HCT116 (cell line): ENCODE measurements at regions of chr22 and their contacts with region 1.

Region 1: GRCh38 chr22:31977141-31977841 is 33.0 kb downstream of the YWHAH start:
- DNase-seq: peak; percentile 81
- ATAC-seq: peak; percentile 99
- H3K4me3 ChIP-seq: no peak overlapping the region
- H3K27ac ChIP-seq: no peak overlapping the region
- H3K4me1 ChIP-seq: peaks cover 0 to 6% of the 10 kb centered on the region in 2 experiments; a peak in 2 of 4 replicates
- H3K27me3 ChIP-seq: no peaks in the 10 kb centered on the region
- CTCF ChIP-seq: peak; percentile 84 to 92 (median 86)
- POLR2A ChIP-seq: no peak
- RAD21 ChIP-seq: peak; percentile 98

Region 2: GRCh38 chr22:31929167-31929930 is 47.9 kb before region 1 on chr22:
- CTCF ChIA-PET with region 1: no interaction called
- POLR2A ChIA-PET with region 1: no interaction called
- RAD21 ChIA-PET with region 1: no interaction called
- intact Hi-C with region 1: no loop called
- DNase-seq: no peak
- ATAC-seq: no peak
- H3K4me3 ChIP-seq: no peak overlapping the region
- H3K27ac ChIP-seq: no peak overlapping the region
- H3K4me1 ChIP-seq: no peaks in the 10 kb centered on the region
- H3K27me3 ChIP-seq: peaks cover 5% of the 10 kb centered on the region; the same call in 1 of the 2 replicates
- CTCF ChIP-seq: no peak
- POLR2A ChIP-seq: no peak
- RAD21 ChIP-seq: no peak

Region 3: DNA sequence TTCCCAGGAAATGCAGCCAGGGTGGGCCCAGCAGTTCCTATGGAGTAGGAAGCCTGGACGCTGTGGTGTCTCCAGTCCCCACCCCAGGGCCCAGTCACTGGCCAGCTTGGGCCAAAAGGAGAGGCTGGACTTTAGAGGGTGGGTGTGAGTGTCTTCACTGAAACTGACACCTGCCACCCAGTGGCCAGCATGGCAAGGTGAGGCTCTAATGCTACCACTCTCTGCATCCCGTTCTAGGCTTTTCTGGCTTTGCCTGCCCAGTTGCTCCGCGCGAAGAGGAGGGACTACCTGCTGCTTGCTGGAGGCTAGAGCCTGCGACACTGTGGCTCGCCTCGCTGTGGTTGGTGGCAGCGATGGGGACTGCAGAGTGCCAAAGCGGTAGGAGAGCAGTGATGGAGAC is 146.4 kb after region 1 on chr22:
- CTCF ChIA-PET with region 1: interaction called, 11 read pairs
- POLR2A ChIA-PET with region 1: no interaction called
- RAD21 ChIA-PET with region 1: no interaction called
- intact Hi-C with region 1: loop called (anchors 2 kb)
- DNase-seq: no peak
- ATAC-seq: peak; percentile 92
- H3K4me3 ChIP-seq: no peak overlapping the region
- H3K27ac ChIP-seq: no peak overlapping the region
- H3K4me1 ChIP-seq: no peaks in the 10 kb centered on the region
- H3K27me3 ChIP-seq: no peaks in the 10 kb centered on the region
- CTCF ChIP-seq: peak; percentile 18 to 60 (median 59); a peak in 5 of 6 replicates
- POLR2A ChIP-seq: no peak
- RAD21 ChIP-seq: peak; percentile 34

Region 4: DNA sequence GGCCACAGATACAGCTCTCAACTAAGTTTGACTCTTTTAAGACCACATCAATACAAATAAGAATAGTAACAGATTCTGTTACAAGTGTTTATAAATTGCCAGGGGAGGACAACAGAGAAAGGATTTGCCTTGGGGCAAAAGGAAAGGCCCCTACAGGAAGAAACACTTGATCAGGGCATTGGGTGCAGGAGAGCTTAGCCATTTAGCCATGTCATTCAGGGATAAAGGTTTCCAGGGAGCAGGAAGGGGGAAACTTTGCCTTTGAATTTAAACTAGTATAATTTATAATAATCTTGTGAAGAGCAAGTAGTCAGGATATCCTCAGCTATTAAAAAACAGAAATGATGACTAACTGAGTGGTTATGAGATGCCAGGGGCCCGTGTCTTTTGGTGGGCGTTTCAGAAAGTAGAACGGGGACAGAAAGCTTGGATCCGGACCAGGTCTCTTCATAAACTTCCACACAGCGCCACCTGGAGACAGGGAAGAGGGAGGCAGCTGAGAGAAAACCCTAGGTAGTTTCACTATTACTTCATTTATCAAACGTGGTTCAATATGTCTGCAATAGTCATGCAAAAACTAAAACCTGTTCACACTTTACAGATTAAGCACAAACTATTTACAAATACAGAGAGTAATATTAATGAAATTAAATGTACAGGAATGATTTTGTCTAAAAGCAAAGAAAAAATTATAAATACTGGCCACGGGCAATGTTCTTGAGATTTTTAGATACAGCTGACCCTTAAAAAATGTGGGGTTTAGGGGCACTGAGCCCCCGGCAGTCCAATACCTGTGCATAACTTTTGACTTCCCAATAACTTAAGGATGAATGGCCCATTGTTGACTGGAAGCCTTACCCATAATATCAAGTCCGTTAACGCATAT is 288.8 kb after region 1 on chr22:
- CTCF ChIA-PET with region 1: interaction called, 13 read pairs
- POLR2A ChIA-PET with region 1: no interaction called
- RAD21 ChIA-PET with region 1: interaction called in 1 of 2 experiments, 4 read pairs
- intact Hi-C with region 1: loop called (anchors 5 kb)
- DNase-seq: peak; percentile 44
- ATAC-seq: peak; percentile 85
- H3K4me3 ChIP-seq: no peak overlapping the region
- H3K27ac ChIP-seq: peak overlapping the region; percentile 13; the same call in 1 of the 2 replicates
- H3K4me1 ChIP-seq: peaks cover 3 to 5% of the 10 kb centered on the region in 2 experiments; a peak in 2 of 4 replicates
- H3K27me3 ChIP-seq: no peaks in the 10 kb centered on the region
- CTCF ChIP-seq: peak; percentile 58 to 87 (median 84)
- POLR2A ChIP-seq: no peak
- RAD21 ChIP-seq: peak; percentile 50

Region 5: GRCh38 chr22:32378707-32379272 is 401.5 kb after region 1 on chr22:
- CTCF ChIA-PET with region 1: interaction called, 9 read pairs
- POLR2A ChIA-PET with region 1: interaction called, 3 read pairs
- RAD21 ChIA-PET with region 1: no interaction called
- intact Hi-C with region 1: loop called (anchors 1 kb)
- DNase-seq: peak; percentile 54
- ATAC-seq: peak; percentile 99
- H3K4me3 ChIP-seq: no peak overlapping the region
- H3K27ac ChIP-seq: no peak overlapping the region
- H3K4me1 ChIP-seq: no peaks in the 10 kb centered on the region; a peak in 1 of 4 replicates
- H3K27me3 ChIP-seq: no peaks in the 10 kb centered on the region
- CTCF ChIP-seq: peak; percentile 98
- POLR2A ChIP-seq: no peak
- RAD21 ChIP-seq: peak; percentile 80